ENCODE measurements at regions of chr7 and their contacts with region 1.

Region 1: GRCh38 chr7:50467817-50468610 is 17.9 kb upstream of the FIGNL1 start:
- DNase-seq: peak; percentile 54 to 88 (median 77)
- ATAC-seq: peak; percentile 98
- H3K4me3 ChIP-seq: peak overlapping the region; percentile 1 to 12
- H3K4me3 Mint-ChIP-seq: peak overlapping the region; percentile 63
- H3K27ac ChIP-seq: no peak overlapping the region
- H3K27ac Mint-ChIP-seq: no peak overlapping the region
- H3K4me1 ChIP-seq: peaks cover 4% of the 10 kb centered on the region
- H3K4me1 Mint-ChIP-seq: peaks cover 11% of the 10 kb centered on the region
- H3K27me3 ChIP-seq: no peaks in the 10 kb centered on the region
- H3K27me3 Mint-ChIP-seq: no peaks in the 10 kb centered on the region
- CTCF ChIP-seq: peak; percentile 91

Region 2: DNA sequence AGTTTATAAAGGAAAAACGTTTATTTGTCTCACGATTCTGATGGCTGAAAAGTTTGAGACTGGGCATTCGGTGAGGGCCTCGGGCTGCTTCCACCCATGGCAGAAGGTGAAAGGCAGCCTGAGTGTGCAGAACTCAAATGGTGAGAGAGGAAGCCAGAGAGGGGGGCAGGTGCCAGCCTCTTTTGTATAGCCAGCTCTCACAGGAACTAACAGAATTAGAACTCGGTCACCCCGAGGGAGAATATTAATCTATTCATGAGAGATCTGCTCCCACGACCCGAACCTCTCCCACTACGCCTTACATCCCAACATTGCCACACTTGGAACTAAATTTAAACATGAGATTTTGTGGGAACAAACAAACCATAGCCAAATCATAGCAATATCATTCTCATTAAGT is 487.5 kb before region 1 on chr7:
- CTCF ChIA-PET with region 1: no interaction called
- POLR2A ChIA-PET with region 1: no interaction called
- intact Hi-C with region 1: no loop called
- DNase-seq: no peak
- ATAC-seq: no peak
- H3K4me3 ChIP-seq: no peak overlapping the region
- H3K4me3 Mint-ChIP-seq: no peak overlapping the region
- H3K27ac ChIP-seq: no peak overlapping the region
- H3K27ac Mint-ChIP-seq: no peak overlapping the region
- H3K4me1 ChIP-seq: no peaks in the 10 kb centered on the region
- H3K4me1 Mint-ChIP-seq: no peaks in the 10 kb centered on the region
- H3K27me3 ChIP-seq: no peaks in the 10 kb centered on the region
- H3K27me3 Mint-ChIP-seq: peaks cover 3% of the 10 kb centered on the region
- CTCF ChIP-seq: no peak

Region 3: DNA sequence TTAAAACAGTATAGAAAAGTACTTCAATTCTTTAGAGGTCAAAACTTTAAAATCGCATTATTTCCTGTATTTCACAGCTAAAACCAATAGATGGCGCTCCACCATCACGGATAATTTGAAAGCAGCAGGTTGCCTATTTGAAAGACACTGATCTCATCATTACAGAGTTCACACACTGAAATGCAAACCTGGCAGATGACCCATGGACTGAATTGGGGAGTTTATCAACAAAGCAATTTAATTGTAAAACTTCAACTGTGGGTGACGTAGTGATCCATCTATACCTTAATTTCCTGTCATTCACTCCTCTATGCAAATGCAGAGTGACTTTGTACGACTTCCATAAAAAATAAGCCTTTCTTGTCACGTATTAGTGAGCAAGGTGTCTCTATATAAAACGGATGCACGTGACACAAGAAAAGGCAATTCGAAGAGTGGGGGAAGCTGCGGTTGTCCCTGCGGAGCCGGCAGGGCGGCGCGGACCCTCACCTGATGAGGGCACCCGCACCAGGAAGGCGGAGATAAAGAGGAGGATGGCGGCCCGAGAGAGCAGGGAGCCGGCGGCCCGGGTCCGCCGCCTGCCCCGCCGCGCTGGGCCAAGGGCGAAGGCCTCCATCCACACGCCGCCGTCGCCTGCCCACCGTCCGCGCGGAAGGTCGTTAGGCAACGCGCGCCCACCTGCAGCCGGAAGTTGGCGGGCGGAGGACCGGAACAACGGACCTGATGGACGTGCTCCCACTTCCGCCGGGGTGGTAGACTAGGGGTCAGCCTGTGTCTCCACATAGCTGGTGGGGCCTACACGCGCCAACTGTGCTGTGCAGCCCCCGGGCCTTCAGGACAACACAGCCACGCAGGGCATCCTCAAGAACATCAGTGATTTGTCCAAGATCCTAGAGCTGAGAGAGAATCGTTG is 375.2 kb before region 1 on chr7 and contains the start of gene ZPBP:
- CTCF ChIA-PET with region 1: interaction called, 16 read pairs
- POLR2A ChIA-PET with region 1: no interaction called
- intact Hi-C with region 1: loop called (anchors 2 kb)
- DNase-seq: peak in 7 of 9 experiments; percentile 42 to 79 (median 54)
- ATAC-seq: peak; percentile 78
- H3K4me3 ChIP-seq: peak within 1 kb of the TSS; percentile 40 to 63
- H3K4me3 Mint-ChIP-seq: peak within 1 kb of the TSS; percentile 92
- H3K27ac ChIP-seq: peak within 1 kb of the TSS; percentile 25 to 51
- H3K27ac Mint-ChIP-seq: peak within 1 kb of the TSS; percentile 86
- H3K4me1 ChIP-seq: peaks cover 4% of the 10 kb centered on the region
- H3K4me1 Mint-ChIP-seq: peaks cover 16% of the 10 kb centered on the region
- H3K27me3 ChIP-seq: no peaks in the 10 kb centered on the region
- H3K27me3 Mint-ChIP-seq: no peaks in the 10 kb centered on the region
- CTCF ChIP-seq: peak; percentile 98
- total RNA-seq, gene ZPBP: not detected

Region 4: DNA sequence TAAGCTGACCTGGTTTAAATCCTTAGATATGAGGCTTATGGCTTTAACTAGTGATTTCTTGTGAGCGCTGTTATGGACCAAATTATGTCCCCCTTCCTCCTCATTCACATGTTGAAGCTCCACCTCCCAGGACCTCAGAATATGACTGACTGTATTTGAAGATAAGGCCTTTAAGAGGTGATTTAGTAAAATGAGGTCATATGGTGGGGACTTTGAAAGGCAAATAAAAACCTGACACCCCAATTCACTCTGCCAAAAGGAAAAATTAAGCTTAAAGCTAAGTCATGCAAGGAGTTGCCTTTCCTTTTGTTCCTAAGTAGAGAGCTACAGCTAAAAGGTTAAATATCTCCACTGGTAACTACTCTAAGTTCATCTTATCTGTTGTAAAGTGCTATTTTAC is 18.5 kb after region 1 on chr7:
- CTCF ChIA-PET with region 1: interaction called, 10 read pairs
- POLR2A ChIA-PET with region 1: no interaction called
- intact Hi-C with region 1: no loop called
- DNase-seq: no peak
- ATAC-seq: no peak
- H3K4me3 ChIP-seq: no peak overlapping the region
- H3K4me3 Mint-ChIP-seq: no peak overlapping the region
- H3K27ac ChIP-seq: no peak overlapping the region
- H3K27ac Mint-ChIP-seq: no peak overlapping the region
- H3K4me1 ChIP-seq: no peaks in the 10 kb centered on the region
- H3K4me1 Mint-ChIP-seq: no peaks in the 10 kb centered on the region
- H3K27me3 ChIP-seq: no peaks in the 10 kb centered on the region
- H3K27me3 Mint-ChIP-seq: peaks cover 3% of the 10 kb centered on the region
- CTCF ChIP-seq: no peak

Region 5: GRCh38 chr7:50632561-50633413 is 164.8 kb after region 1 on chr7:
- CTCF ChIA-PET with region 1: interaction called, 21 read pairs
- POLR2A ChIA-PET with region 1: no interaction called
- intact Hi-C with region 1: loop called (anchors 1 to 2 kb)
- DNase-seq: peak; percentile 31 to 77 (median 58)
- ATAC-seq: peak; percentile 83
- H3K4me3 ChIP-seq: no peak overlapping the region
- H3K4me3 Mint-ChIP-seq: no peak overlapping the region
- H3K27ac ChIP-seq: no peak overlapping the region
- H3K27ac Mint-ChIP-seq: no peak overlapping the region
- H3K4me1 ChIP-seq: no peaks in the 10 kb centered on the region
- H3K4me1 Mint-ChIP-seq: no peaks in the 10 kb centered on the region
- H3K27me3 ChIP-seq: no peaks in the 10 kb centered on the region
- H3K27me3 Mint-ChIP-seq: peaks cover 13% of the 10 kb centered on the region
- CTCF ChIP-seq: peak; percentile 92

Region 6: GRCh38 chr7:50679218-50680007 is 211.4 kb after region 1 on chr7:
- CTCF ChIA-PET with region 1: interaction called, 85 read pairs
- POLR2A ChIA-PET with region 1: interaction called, 6 read pairs
- intact Hi-C with region 1: loop called (anchors 1 kb)
- DNase-seq: peak in 2 of 9 experiments; percentile 63 to 75
- ATAC-seq: peak; percentile 67
- H3K4me3 ChIP-seq: no peak overlapping the region
- H3K4me3 Mint-ChIP-seq: no peak overlapping the region
- H3K27ac ChIP-seq: no peak overlapping the region
- H3K27ac Mint-ChIP-seq: no peak overlapping the region
- H3K4me1 ChIP-seq: no peaks in the 10 kb centered on the region
- H3K4me1 Mint-ChIP-seq: peaks cover 2% of the 10 kb centered on the region
- H3K27me3 ChIP-seq: no peaks in the 10 kb centered on the region
- H3K27me3 Mint-ChIP-seq: peaks cover 5% of the 10 kb centered on the region
- CTCF ChIP-seq: peak; percentile 68

Region 7: GRCh38 chr7:51141451-51142003 is 673.5 kb after region 1 on chr7:
- CTCF ChIA-PET with region 1: interaction called, 4 read pairs
- POLR2A ChIA-PET with region 1: no interaction called
- intact Hi-C with region 1: loop called in 1 of 2 experiments (anchors 5 kb)
- DNase-seq: peak in 2 of 9 experiments; percentile 12 to 21
- ATAC-seq: no peak
- H3K4me3 ChIP-seq: no peak overlapping the region
- H3K4me3 Mint-ChIP-seq: no peak overlapping the region
- H3K27ac ChIP-seq: no peak overlapping the region
- H3K27ac Mint-ChIP-seq: no peak overlapping the region
- H3K4me1 ChIP-seq: no peaks in the 10 kb centered on the region
- H3K4me1 Mint-ChIP-seq: no peaks in the 10 kb centered on the region
- H3K27me3 ChIP-seq: no peaks in the 10 kb centered on the region
- H3K27me3 Mint-ChIP-seq: no peaks in the 10 kb centered on the region
- CTCF ChIP-seq: no peak

Measured in CD8-positive, alpha-beta T cell (primary cell).